Activated naive CD4-positive, alpha-beta T cell treated with anti-CD3 and anti-CD28 coated beads, Interleukin-2, amount 10 ng/mL, durations not matched to agents 7 days and 5 days (primary cell): ENCODE measurements at regions of chr5 and their contacts with region 1.

Region 1: GRCh38 chr5:146520731-146521130 is 4.7 kb upstream of the GPR151 start:
- DNase-seq: no peak
- H3K4me3 Mint-ChIP-seq: no peak overlapping the region
- H3K27ac Mint-ChIP-seq: no peak overlapping the region
- H3K4me1 Mint-ChIP-seq: no peaks in the 10 kb centered on the region
- H3K27me3 Mint-ChIP-seq: peaks cover 20% of the 10 kb centered on the region

Region 2: DNA sequence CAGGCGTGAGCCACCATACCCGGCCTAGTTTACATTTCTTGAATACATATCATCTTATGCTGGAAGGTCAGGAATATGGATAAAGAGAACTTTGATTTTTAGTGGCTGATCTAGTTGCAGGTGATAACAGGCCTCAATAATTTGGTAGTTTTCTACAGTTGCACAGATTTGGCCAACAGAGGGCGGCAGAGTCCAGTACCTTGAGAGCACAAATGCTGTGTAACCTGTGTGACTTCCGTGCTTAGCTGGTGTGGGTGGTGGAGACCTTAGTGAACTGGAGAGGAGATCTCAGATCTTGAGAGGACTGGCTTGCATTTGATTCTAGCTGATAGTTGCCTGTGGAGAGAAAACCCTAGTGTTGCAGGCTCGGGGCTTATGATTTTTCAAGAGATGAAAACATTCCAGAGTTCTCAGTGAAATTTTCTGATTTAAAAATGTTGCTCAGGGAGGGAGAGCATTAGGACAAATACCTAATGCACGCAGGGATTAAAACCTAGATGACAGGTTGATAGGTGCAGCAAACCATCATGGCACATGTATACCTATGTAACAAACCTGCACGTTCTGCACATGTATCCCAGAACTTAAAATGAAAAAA is 12.6 kb after region 1 on chr5:
- CTCF ChIA-PET with region 1: interaction called, 14 read pairs
- DNase-seq: peak; percentile 85
- H3K4me3 Mint-ChIP-seq: no peak overlapping the region
- H3K27ac Mint-ChIP-seq: no peak overlapping the region
- H3K4me1 Mint-ChIP-seq: peaks cover 12% of the 10 kb centered on the region
- H3K27me3 Mint-ChIP-seq: peaks cover 9% of the 10 kb centered on the region

Region 3: DNA sequence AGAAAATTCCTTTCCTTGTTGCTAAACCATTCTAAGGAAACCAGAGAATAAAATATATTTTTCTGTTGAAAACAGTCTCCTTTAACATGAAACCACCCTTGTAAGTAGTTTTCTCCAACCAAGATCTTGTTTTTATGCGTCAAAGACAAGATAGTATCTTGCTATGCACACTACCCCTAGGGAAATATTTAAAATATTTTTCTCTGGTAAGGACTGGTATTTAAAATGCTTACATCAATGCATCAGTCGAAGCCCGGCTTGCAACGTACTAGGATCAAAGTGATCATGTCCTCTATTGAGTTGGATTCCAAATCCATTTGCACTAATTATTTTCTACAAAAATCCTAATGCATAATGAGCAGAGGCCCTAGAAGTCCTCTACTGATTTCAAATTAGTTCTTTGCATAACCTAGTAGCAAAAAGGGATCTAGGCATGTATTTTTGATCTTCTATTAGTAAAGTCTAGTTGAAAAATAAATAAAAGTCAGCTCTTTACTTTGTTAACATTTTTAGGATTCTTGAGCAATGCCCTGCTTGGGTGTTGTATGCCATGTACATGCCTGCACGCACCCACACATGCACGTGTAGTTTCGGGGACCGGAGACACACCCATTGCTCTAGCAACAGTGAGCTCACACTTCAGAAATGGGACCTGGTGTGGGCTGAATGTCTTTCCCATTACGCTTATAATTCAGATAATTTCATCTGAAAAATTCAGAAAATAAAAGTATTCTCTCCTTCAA is 160.3 kb after region 1 on chr5:
- CTCF ChIA-PET with region 1: no interaction called
- DNase-seq: no peak
- H3K4me3 Mint-ChIP-seq: no peak overlapping the region
- H3K27ac Mint-ChIP-seq: no peak overlapping the region
- H3K4me1 Mint-ChIP-seq: no peaks in the 10 kb centered on the region
- H3K27me3 Mint-ChIP-seq: no peaks in the 10 kb centered on the region